ENCODE measurements at regions of chrX and their contacts with region 1.

Region 1: GRCh38 chrX:110156167-110156754 is 153.3 kb downstream of the TMEM164 start:
- DNase-seq: no peak
- ATAC-seq: no peak
- H3K4me3 Mint-ChIP-seq: no peak overlapping the region
- H3K27ac Mint-ChIP-seq: no peak overlapping the region
- H3K4me1 Mint-ChIP-seq: peaks cover 20% of the 10 kb centered on the region
- H3K27me3 Mint-ChIP-seq: no peaks in the 10 kb centered on the region

Region 2: GRCh38 chrX:109959356-109959871 is 196.8 kb before region 1 on chrX:
- CTCF ChIA-PET with region 1: no interaction called
- DNase-seq: no peak
- ATAC-seq: no peak
- H3K4me3 Mint-ChIP-seq: no peak overlapping the region
- H3K27ac Mint-ChIP-seq: no peak overlapping the region
- H3K4me1 Mint-ChIP-seq: peaks cover 24% of the 10 kb centered on the region
- H3K27me3 Mint-ChIP-seq: no peaks in the 10 kb centered on the region

Region 3: DNA sequence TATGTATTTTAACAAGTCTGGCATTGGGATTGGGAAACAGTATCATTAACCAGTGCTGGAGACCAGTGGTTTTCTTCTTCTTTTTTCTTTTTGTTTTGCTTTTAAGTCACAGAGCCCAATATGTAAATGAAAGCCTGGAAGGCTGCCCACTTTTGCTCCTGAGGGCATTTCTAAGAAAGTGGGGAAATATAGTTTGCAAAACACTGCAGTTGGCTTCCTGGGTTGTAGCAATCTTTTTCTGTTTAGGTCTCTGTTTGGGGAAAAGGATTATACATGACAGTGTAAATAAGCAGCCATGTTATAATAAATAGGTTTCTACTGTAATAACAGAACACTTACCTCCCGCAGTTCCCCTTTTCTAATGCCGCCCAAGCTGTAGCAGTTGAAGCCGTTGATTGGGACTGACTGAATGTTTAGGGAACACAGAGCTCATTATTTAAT is 47.9 kb before region 1 on chrX:
- CTCF ChIA-PET with region 1: no interaction called
- DNase-seq: no peak
- ATAC-seq: no peak
- H3K4me3 Mint-ChIP-seq: no peak overlapping the region
- H3K27ac Mint-ChIP-seq: no peak overlapping the region
- H3K4me1 Mint-ChIP-seq: peaks cover 4% of the 10 kb centered on the region
- H3K27me3 Mint-ChIP-seq: no peaks in the 10 kb centered on the region

Region 4: DNA sequence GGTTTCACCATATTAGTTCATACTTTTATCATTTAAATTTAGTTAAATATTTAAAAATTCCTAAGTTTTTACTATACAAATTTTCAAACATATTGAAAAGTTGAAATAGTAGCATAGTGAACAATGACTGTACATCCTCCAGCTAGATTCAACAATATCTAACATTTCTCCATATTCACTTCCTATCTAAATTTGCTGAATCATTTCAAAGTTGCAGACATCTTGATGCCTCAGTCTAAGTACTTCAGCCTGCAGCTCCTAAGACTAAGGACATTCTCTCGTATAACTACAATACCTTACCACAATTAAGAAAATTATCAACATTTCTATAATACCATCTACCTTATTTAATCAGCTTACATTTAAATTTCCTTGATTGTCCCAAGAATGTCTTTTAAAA is 20.6 kb before region 1 on chrX:
- CTCF ChIA-PET with region 1: no interaction called
- DNase-seq: no peak
- ATAC-seq: no peak
- H3K4me3 Mint-ChIP-seq: no peak overlapping the region
- H3K27ac Mint-ChIP-seq: no peak overlapping the region
- H3K4me1 Mint-ChIP-seq: peaks cover 18% of the 10 kb centered on the region
- H3K27me3 Mint-ChIP-seq: no peaks in the 10 kb centered on the region

Region 5: DNA sequence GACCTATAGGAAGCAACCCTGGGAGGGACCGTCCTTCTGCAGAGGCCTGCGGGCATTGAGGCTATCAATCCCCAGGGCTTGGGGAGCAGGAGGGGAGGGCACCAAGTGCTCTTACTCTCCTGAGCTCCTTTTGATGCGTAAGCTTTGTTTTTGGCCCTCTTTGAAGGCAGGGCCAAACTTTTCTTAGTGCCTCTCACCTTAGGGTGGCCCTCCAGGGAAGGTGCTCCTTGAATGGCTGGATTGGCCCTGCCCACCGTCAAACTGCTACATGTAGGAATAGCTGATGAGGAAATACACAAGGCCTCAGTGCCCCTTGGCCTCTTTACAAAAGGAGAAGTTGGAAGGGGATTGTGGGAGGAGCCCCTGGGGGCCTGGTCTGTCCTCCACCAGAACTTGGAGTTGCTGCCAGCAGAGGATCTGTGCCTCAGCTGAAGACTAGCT is 18.7 kb after region 1 on chrX:
- CTCF ChIA-PET with region 1: no interaction called
- DNase-seq: no peak
- ATAC-seq: no peak
- H3K4me3 Mint-ChIP-seq: no peak overlapping the region
- H3K27ac Mint-ChIP-seq: no peak overlapping the region
- H3K4me1 Mint-ChIP-seq: no peaks in the 10 kb centered on the region
- H3K27me3 Mint-ChIP-seq: no peaks in the 10 kb centered on the region

Region 6: GRCh38 chrX:110418316-110419235 is 262.3 kb after region 1 on chrX:
- CTCF ChIA-PET with region 1: interaction called, 271 read pairs
- DNase-seq: no peak
- ATAC-seq: no peak
- H3K4me3 Mint-ChIP-seq: no peak overlapping the region
- H3K27ac Mint-ChIP-seq: no peak overlapping the region
- H3K4me1 Mint-ChIP-seq: peaks cover 11% of the 10 kb centered on the region
- H3K27me3 Mint-ChIP-seq: peaks cover 2% of the 10 kb centered on the region

Measured in activated CD8-positive, alpha-beta memory T cell treated with anti-CD3 and anti-CD28 coated beads, Interleukin-2, amount 10 ng/mL, durations not matched to agents 7 days and 5 days (primary cell).